Dendritic cell treated with granulocyte-macrophage colony-stimulating factor and Interleukin-4, amounts not matched to agents 40 ng/mL and 50 ng/mL, for 4 days (primary cell): ENCODE measurements at regions of chr22 and their contacts with region 1.

Region 1: DNA sequence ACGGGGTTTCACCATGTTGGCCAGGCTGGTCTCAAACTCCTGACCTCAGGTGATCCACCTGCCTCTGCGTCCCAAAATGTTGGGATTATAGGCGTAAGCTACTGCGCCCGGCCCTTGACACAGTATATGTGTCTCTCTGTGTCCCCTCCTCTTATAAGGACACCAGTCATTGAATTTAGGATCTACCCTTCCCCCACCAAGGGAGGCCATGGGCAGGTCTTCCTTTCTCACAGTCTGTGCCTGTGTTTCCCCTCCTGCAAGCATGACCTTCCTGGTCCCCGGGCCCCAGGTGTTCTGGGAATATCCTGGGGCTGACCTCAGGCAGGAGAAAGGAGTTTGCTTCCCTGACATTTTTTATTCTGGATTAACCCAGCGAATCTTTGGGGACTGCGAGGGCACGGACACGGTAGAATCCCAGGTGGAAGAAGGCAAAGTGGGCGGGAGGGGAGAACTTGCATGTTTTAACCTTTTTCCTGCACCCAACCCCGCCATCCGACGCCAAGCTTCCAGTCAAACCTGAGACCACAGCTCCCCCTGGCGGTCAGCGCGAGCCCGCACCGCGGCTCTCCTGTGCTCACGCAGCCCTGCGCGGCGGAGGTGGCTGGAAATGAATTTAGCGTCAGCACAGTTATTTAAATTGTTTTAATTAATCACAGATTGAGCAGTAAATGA is 42.1 kb upstream of the ISX start:
- H3K4me3 Mint-ChIP-seq: no peak overlapping the region
- H3K27ac Mint-ChIP-seq: no peak overlapping the region
- H3K4me1 Mint-ChIP-seq: peaks cover 5% of the 10 kb centered on the region
- H3K27me3 Mint-ChIP-seq: peaks cover 21% of the 10 kb centered on the region

Region 2: DNA sequence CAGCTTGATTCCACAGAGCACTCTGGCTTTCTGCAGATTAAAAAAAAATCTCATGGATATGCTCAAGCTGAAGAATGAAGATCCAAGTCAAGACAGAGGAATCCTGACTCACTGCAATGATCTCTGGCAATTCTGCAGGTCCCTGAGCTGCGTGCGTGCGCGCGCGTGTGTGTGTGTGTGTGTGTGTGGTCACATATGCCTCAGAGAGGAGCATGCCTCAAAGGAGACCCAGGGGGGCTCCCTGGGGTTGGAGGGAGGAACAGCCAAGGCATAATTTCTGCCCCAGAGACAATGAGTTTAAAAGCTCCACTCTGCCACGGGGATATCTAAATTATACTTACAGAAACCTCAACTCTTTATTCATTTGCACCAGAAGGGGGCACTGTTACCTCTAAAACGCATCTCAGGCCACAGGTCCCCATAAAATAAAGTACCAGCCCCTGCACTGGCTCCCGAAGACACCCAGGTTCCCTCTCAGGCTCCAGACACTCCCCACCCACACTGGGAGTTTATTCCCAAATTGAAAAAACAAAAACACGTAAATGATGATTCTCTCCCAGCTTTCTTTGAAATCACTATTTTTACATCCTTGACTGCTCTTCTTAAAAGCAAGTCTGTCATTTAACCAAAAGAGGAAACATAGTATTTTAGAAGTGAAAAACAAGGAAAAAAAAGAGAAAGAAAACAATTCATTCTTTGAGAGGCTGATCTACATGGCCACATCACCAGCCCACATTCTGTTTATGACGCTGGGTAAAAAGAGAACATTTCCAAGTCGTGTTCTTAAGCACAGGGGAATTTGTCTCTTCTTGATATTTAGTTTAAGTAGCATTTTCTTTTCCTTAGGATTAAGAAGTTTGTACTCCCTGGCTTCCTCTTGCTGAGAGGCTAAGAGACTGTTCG is 1504.5 kb before region 1 on chr22:
- intact Hi-C with region 1: loop called (anchors 10 kb)
- H3K4me3 Mint-ChIP-seq: no peak overlapping the region
- H3K27ac Mint-ChIP-seq: no peak overlapping the region
- H3K4me1 Mint-ChIP-seq: no peaks in the 10 kb centered on the region
- H3K27me3 Mint-ChIP-seq: no peaks in the 10 kb centered on the region

Region 3: GRCh38 chr22:34414484-34415440 is 609.1 kb before region 1 on chr22:
- intact Hi-C with region 1: loop called (anchors 10 kb)
- H3K4me3 Mint-ChIP-seq: no peak overlapping the region
- H3K27ac Mint-ChIP-seq: no peak overlapping the region
- H3K4me1 Mint-ChIP-seq: no peaks in the 10 kb centered on the region
- H3K27me3 Mint-ChIP-seq: no peaks in the 10 kb centered on the region

Region 4: DNA sequence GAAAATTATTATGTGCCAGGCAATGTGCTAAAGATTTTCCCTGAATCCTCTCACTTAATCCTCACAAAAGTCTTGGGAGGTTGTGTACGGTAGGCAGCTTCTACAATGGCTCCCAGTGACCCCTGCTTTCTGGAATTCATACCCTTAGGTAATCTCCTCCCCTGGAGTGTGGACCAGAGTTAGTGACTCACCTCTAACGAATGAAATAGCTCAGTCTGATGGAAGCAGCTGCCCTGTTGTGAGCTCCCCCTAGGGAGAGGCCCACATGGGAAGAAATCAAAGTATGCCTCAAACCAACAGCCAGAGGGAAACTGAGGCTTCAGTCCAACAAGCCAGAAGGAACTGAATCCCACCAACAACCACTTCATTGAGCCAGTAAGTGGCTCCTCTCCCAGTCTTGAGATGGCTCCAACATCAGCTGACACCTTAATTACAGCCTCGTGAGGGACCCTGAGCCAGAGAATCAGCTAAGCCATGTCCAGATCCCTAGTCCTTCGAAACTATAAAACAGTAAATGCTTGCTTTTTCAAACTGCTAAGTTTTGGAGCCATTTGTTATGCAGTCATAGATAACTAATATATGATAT is 56.8 kb before region 1 on chr22:
- intact Hi-C with region 1: no loop called
- H3K4me3 Mint-ChIP-seq: no peak overlapping the region
- H3K27ac Mint-ChIP-seq: no peak overlapping the region
- H3K4me1 Mint-ChIP-seq: no peaks in the 10 kb centered on the region
- H3K27me3 Mint-ChIP-seq: no peaks in the 10 kb centered on the region

Region 5: DNA sequence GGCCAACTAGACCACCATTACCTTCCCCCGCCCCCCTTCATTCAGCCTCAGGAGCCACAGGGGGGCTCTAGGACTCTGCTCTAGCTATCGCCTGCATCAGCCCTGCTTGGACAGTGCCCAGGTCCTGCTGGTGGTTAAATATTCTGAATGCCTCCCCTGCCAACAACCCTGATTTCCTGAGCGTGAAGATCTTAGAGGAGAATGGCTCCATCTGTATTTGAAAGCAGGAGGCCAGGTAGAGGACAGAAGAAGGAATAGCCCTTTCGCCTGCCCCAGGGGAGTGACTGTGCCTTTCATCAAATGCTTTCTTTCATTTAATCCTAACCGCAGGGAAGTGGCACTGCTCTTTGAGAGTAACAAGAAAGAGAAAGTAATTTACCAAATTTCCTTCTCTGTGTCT is 111.3 kb after region 1 on chr22:
- intact Hi-C with region 1: no loop called
- H3K4me3 Mint-ChIP-seq: no peak overlapping the region
- H3K27ac Mint-ChIP-seq: no peak overlapping the region
- H3K4me1 Mint-ChIP-seq: no peaks in the 10 kb centered on the region
- H3K27me3 Mint-ChIP-seq: peaks cover 13% of the 10 kb centered on the region